ENCODE measurements at regions of chr15 and their contacts with region 1.

Region 1: GRCh38 chr15:75523011-75523410 is 56.1 kb downstream of the PTPN9 start:
- DNase-seq: no peak
- ATAC-seq: no peak
- H3K4me3 ChIP-seq: no peak overlapping the region
- H3K4me1 ChIP-seq: no peaks in the 10 kb centered on the region
- CTCF ChIP-seq: no peak

Region 2: GRCh38 chr15:75468913-75469598 is 54.0 kb before region 1 on chr15:
- intact Hi-C with region 1: loop called in 1 of 2 experiments (anchors 10 kb)
- DNase-seq: no peak
- ATAC-seq: no peak
- H3K4me3 ChIP-seq: no peak overlapping the region
- H3K4me1 ChIP-seq: no peaks in the 10 kb centered on the region
- CTCF ChIP-seq: no peak

Region 3: DNA sequence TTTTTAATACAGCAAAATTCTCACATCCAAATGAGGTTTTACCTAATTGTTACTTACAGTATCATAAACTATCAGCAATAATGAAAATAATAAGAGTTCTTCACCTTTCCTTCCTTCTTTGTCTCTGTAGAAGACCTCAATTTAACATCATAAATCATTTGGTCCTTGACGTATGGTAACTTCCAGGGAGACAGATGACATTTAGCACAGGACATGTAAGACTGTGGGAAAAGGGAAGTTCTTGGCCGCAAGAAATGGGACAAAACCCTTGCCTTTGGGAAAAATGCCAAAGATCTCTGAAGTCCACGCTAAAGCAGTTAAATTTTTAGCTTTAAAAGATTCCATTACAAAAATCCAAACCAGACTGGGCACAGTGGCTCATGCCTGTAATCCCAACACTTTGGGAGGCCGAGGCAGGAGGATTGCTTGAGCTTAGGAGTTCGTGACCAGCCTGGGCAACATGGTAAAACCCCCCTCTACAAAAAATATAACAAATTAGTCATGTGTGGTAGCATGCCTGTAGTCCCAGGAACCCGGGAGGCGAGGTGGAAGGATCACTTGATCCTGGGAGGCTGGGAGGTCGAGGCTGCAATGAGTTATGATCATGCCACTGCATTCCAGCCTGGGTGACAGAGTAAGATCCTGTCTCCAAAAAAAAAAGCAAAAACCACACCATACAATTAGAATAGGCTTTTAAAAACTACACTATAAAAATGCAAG is 47.3 kb after region 1 on chr15:
- intact Hi-C with region 1: no loop called
- DNase-seq: no peak
- ATAC-seq: no peak
- H3K4me3 ChIP-seq: no peak overlapping the region
- H3K4me1 ChIP-seq: peaks cover 6% of the 10 kb centered on the region
- CTCF ChIP-seq: no peak

Measured in mucosa of descending colon (tissue), 3 donors.